Adrenal gland (tissue), 19 donors: ENCODE measurements at regions of chr3 and their contacts with region 1.

Region 1: GRCh38 chr3:19901337-19901736 is 32.7 kb downstream of the EFHB start:
- DNase-seq: no peak
- H3K4me3 ChIP-seq: no peak overlapping the region
- H3K27ac ChIP-seq: no peak overlapping the region
- H3K4me1 ChIP-seq: no peaks in the 10 kb centered on the region
- H3K27me3 ChIP-seq: no peaks in the 10 kb centered on the region
- CTCF ChIP-seq: no peak
- POLR2A ChIP-seq: no peak

Region 2: DNA sequence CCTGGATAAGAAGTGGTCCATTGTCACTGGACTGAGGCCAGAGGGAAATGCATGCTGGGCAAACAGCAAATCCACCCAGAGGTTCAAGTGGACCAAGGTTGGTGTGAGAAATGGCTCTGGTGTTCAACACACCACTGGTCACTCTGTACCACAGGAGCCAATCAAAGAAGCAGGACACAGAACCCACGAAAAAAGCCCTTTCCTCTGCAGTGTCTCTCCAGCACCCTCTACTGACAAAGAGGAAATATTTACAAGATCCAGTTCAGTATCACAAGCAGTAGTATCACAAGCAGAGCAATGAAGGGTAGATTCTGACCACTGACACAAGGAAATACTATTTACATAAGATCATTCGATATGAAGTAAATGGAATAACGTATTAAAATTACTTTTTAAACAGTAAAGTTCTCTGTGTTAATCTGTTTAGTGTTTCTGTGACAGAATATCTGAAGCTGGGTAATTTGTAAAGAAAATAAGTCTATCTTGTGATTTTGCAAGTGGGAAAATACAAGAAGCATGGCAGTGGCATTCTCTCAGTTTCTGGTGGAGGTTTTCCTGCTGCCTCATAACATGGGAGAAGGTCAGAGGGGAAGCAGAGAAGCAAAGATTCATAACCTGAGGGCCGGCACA is 358.0 kb before region 1 on chr3:
- intact Hi-C with region 1: no loop called
- DNase-seq: peak in 5 of 7 donors; percentile 8 to 56 (median 22)
- H3K4me3 ChIP-seq: no peak overlapping the region
- H3K27ac ChIP-seq: no peak overlapping the region
- H3K4me1 ChIP-seq: no peaks in the 10 kb centered on the region
- H3K27me3 ChIP-seq: no peaks in the 10 kb centered on the region
- CTCF ChIP-seq: peak in 5 of 6 experiments; percentile 25 to 61 (median 47)
- POLR2A ChIP-seq: no peak

Region 3: GRCh38 chr3:19573644-19574043 is 327.7 kb before region 1 on chr3:
- intact Hi-C with region 1: no loop called
- DNase-seq: no peak
- H3K4me3 ChIP-seq: no peak overlapping the region
- H3K27ac ChIP-seq: no peak overlapping the region
- H3K4me1 ChIP-seq: no peaks in the 10 kb centered on the region
- H3K27me3 ChIP-seq: no peaks in the 10 kb centered on the region
- CTCF ChIP-seq: no peak
- POLR2A ChIP-seq: no peak

Region 4: DNA sequence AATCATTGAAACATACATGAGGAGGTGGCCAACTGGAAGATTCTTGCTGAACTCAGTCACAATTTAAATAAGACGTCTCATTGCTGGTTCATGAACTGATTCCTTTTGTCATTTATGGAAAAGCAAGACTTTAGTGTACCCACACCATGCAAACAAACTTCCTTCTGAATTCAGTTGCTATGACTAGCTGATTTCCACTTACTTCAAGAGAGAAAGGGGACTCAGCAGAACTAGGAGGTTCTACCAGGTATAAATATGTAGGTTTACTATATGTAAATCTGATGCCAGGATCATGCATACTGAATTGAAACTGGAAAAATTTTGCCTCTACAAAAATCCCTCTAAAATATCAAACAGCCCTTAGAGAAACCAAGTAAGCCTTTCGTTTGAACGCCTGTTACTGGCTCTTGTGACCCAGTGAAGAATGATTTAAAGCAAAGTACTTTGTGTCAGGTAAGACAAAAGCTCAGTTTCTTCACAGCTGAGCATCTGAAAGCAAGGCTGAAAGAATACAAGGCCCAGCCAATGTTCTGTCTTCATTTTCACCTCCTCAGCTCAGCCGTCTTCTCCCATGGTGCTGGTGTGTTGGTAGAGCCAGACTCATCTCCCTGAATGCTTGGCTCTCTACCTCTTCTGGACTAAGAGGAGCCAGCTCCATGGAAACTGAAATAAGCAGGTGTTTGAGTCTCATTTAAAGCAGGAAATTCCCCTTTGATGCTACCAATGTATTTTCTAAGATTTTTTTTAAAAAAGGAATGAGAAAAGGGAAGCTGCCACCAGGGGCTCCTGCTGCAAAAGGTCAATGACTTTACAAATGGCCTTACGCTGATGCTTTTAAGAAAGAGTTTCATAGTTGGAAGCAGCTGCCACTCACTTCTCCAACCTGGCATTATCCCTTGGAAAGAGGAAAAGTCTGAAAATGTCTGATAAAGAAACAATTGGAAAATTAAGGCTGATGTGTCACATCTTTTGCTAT is 268.9 kb before region 1 on chr3:
- intact Hi-C with region 1: no loop called
- DNase-seq: no peak
- H3K4me3 ChIP-seq: no peak overlapping the region
- H3K27ac ChIP-seq: no peak overlapping the region
- H3K4me1 ChIP-seq: no peaks in the 10 kb centered on the region
- H3K27me3 ChIP-seq: no peaks in the 10 kb centered on the region
- CTCF ChIP-seq: no peak
- POLR2A ChIP-seq: no peak

Region 5: GRCh38 chr3:20380295-20380694 is 479.0 kb after region 1 on chr3:
- intact Hi-C with region 1: loop called in 1 of 2 experiments (anchors 10 kb)
- DNase-seq: no peak
- H3K4me3 ChIP-seq: no peak overlapping the region
- H3K27ac ChIP-seq: no peak overlapping the region
- H3K4me1 ChIP-seq: peaks cover 0 to 7% of the 10 kb centered on the region in 2 donors
- H3K27me3 ChIP-seq: no peaks in the 10 kb centered on the region
- CTCF ChIP-seq: no peak
- POLR2A ChIP-seq: no peak